ENCODE measurements at regions of chrX and their contacts with region 1.

Region 1: GRCh38 chrX:65534450-65535292 is at the start of gene LAS1L:
- DNase-seq: peak; percentile 93
- ATAC-seq: peak; percentile 99
- H3K4me3 ChIP-seq: peak within 1 kb of the TSS; percentile 56 to 82 (median 79)
- H3K4me3 Mint-ChIP-seq: peak within 1 kb of the TSS; percentile 98
- H3K27ac ChIP-seq: peak within 1 kb of the TSS; percentile 58 to 63
- H3K27ac Mint-ChIP-seq: peak within 1 kb of the TSS; percentile 96
- H3K4me1 ChIP-seq: peaks cover 12 to 19% of the 10 kb centered on the region in 2 donors
- H3K4me1 Mint-ChIP-seq: peaks cover 18% of the 10 kb centered on the region
- H3K27me3 ChIP-seq: no peaks in the 10 kb centered on the region
- H3K27me3 Mint-ChIP-seq: no peaks in the 10 kb centered on the region
- CTCF ChIP-seq: no peak
- total RNA-seq, gene LAS1L: 44.5 and 46.7 TPM in 2 replicates

Region 2: DNA sequence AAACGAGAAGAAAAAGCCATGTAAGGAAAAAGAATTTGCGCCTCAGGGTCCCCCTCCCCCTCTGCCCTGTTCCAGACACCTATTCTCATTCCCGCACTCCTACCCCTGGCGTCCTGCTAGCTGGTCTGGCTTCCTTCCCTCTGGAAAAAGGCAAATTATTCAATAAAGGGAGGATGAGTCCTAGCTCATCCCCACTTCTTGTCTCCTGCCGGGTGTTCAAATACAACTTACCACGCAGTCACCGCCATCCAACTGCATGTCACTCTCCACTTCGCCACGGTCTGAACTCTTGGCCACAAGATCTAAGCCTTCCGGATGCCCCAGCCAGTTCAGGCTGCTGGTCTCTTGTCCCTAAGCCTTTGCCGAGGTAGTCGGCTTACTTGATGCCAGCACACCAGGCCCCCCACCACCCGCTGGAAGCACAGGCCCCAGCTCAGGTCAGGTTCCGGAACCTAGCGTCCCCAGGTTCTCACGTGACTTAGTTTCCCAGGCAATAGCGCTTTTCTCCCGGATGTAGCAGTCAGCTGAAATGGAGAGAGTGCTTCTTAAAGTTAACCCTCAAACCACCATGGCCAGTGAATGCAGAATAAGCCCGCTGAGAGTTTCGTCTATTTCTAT is 1974.0 kb before region 1 on chrX:
- CTCF ChIA-PET with region 1: no interaction called
- POLR2A ChIA-PET with region 1: no interaction called
- intact Hi-C with region 1: loop called (anchors 10 kb)
- DNase-seq: peak; percentile 63
- ATAC-seq: peak; percentile 68
- H3K4me3 ChIP-seq: peak overlapping the region; percentile 62 to 77 (median 63)
- H3K4me3 Mint-ChIP-seq: peak overlapping the region; percentile 99
- H3K27ac ChIP-seq: peak overlapping the region; percentile 38 to 75
- H3K27ac Mint-ChIP-seq: peak overlapping the region; percentile 91
- H3K4me1 ChIP-seq: peaks cover 6 to 8% of the 10 kb centered on the region in 2 donors
- H3K4me1 Mint-ChIP-seq: peaks cover 29% of the 10 kb centered on the region
- H3K27me3 ChIP-seq: peaks cover 0 to under 1% (median 0%) of the 10 kb centered on the region in 4 experiments
- H3K27me3 Mint-ChIP-seq: no peaks in the 10 kb centered on the region
- CTCF ChIP-seq: no peak

Region 3: DNA sequence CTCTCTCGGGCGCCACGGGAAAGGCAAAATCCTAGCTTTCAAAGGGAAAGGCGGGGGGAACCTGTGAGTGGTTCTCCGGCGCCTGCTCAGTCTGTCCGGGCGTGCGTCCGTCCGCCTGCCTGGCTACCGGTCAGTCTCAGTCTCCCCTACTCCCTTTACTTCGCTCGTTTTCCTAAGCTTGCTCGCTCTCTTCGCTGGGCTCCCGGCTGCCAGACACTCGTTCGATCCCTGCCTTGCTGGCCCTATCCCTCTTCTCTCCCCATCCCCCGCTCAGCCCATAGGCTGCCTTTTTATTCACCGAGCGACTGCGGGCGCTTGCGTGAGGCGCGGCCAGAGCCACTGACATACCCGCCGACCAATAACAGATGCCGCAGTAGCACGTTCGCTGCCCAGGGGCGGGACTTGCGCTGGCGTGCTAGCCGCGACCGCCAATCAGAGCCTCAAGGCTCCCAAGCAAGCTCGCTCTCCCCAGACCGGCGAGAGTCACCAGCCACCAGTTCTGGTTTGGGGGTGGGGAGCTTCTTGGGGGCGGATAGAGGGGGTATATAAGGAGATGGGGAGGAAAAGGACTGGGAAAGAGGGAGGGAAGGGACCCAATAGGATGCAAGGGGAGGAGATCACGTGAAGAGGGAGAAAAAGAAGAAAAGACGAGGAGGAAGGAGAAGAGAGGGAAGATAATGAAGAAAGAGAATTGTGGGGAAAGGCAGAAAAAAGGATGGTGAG is 1779.7 kb before region 1 on chrX:
- CTCF ChIA-PET with region 1: no interaction called
- POLR2A ChIA-PET with region 1: no interaction called
- intact Hi-C with region 1: loop called (anchors 2 kb)
- DNase-seq: peak; percentile 89
- ATAC-seq: peak; percentile 98
- H3K4me3 ChIP-seq: peak overlapping the region; percentile 65 to 86 (median 75)
- H3K4me3 Mint-ChIP-seq: peak overlapping the region; percentile 100
- H3K27ac ChIP-seq: peak overlapping the region; percentile 79 to 80
- H3K27ac Mint-ChIP-seq: peak overlapping the region; percentile 97
- H3K4me1 ChIP-seq: peaks cover 4 to 14% of the 10 kb centered on the region in 2 donors
- H3K4me1 Mint-ChIP-seq: peaks cover 27% of the 10 kb centered on the region
- H3K27me3 ChIP-seq: no peaks in the 10 kb centered on the region
- H3K27me3 Mint-ChIP-seq: no peaks in the 10 kb centered on the region
- CTCF ChIP-seq: no peak

Region 4: GRCh38 chrX:64394874-64395567 is 1139.7 kb before region 1 on chrX and contains the start of gene MTMR8:
- CTCF ChIA-PET with region 1: no interaction called
- POLR2A ChIA-PET with region 1: no interaction called
- intact Hi-C with region 1: loop called (anchors 2 kb)
- DNase-seq: peak; percentile 82
- ATAC-seq: peak; percentile 89
- H3K4me3 ChIP-seq: peak within 1 kb of the TSS; percentile 49 to 85 (median 72)
- H3K4me3 Mint-ChIP-seq: peak within 1 kb of the TSS; percentile 98
- H3K27ac ChIP-seq: peak within 1 kb of the TSS; percentile 24 to 65
- H3K27ac Mint-ChIP-seq: peak within 1 kb of the TSS; percentile 90
- H3K4me1 ChIP-seq: peaks cover 0 to 15% of the 10 kb centered on the region in 2 donors
- H3K4me1 Mint-ChIP-seq: peaks cover 35% of the 10 kb centered on the region
- H3K27me3 ChIP-seq: no peaks in the 10 kb centered on the region
- H3K27me3 Mint-ChIP-seq: no peaks in the 10 kb centered on the region
- CTCF ChIP-seq: no peak
- total RNA-seq, gene MTMR8: 11.6 and 11.8 TPM in 2 replicates

Region 5: GRCh38 chrX:64975989-64976672 is 558.5 kb before region 1 on chrX and contains the start of gene ZC4H2:
- CTCF ChIA-PET with region 1: no interaction called
- POLR2A ChIA-PET with region 1: no interaction called
- intact Hi-C with region 1: loop called (anchors 1 kb)
- DNase-seq: peak; percentile 74
- ATAC-seq: peak; percentile 96
- H3K4me3 ChIP-seq: peak within 1 kb of the TSS; percentile 39 to 64 (median 58)
- H3K4me3 Mint-ChIP-seq: peak within 1 kb of the TSS; percentile 92
- H3K27ac ChIP-seq: peak within 1 kb of the TSS in 1 of 2 donors; percentile 33
- H3K27ac Mint-ChIP-seq: peak within 1 kb of the TSS; percentile 64
- H3K4me1 ChIP-seq: peaks cover 4 to 5% of the 10 kb centered on the region in 2 donors
- H3K4me1 Mint-ChIP-seq: peaks cover 15% of the 10 kb centered on the region
- H3K27me3 ChIP-seq: no peaks in the 10 kb centered on the region
- H3K27me3 Mint-ChIP-seq: no peaks in the 10 kb centered on the region
- CTCF ChIP-seq: no peak
- total RNA-seq, gene ZC4H2: 10.9 and 14.1 TPM in 2 replicates

Region 6: DNA sequence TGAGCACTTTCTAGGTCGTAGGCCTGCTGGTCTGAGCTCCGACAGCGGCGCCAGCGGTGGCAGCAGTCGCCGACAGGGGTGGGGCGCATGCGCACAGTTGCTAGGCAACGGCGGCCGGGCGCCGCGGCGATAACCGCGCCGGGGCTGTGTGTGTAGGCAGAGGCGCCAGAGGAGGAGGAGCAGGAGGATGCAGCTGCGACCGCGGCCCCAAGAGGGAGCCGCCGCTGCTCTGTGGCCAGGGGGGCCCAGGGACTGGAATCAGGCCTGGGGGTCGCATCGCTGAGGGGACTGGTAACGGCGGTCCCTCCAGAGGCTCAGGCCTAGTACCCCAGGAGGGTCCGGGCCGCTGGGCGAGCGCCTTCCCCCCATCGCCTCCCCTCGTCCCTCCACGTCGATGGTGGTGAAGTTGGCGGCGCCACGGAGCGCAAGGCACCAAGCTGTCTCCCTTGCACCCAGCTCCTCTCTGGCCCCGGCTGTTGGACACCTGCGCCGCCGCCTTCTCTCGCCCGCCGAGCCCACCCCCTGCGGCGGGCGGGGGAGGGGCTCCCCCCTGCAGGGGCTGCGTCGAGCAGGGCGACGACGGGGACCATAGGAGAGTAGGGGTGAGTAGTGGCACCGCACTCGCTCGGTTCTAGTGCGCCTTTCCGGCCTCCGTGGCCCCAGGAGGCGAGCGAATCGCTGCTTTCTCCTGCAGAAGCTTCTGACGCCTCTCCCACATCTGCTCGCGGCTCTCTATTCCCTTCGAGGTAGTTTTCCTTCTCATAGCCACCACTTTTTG is 499.8 kb before region 1 on chrX:
- CTCF ChIA-PET with region 1: no interaction called
- POLR2A ChIA-PET with region 1: no interaction called
- intact Hi-C with region 1: loop called (anchors 1 kb)
- DNase-seq: peak; percentile 89
- ATAC-seq: peak; percentile 90
- H3K4me3 ChIP-seq: peak within 1 kb of the TSS; percentile 6 to 71 (median 68)
- H3K4me3 Mint-ChIP-seq: peak within 1 kb of the TSS; percentile 96
- H3K27ac ChIP-seq: peak within 1 kb of the TSS; percentile 73 to 85
- H3K27ac Mint-ChIP-seq: peak within 1 kb of the TSS; percentile 98
- H3K4me1 ChIP-seq: peaks cover 8 to 10% of the 10 kb centered on the region in 2 donors
- H3K4me1 Mint-ChIP-seq: peaks cover 24% of the 10 kb centered on the region
- H3K27me3 ChIP-seq: no peaks in the 10 kb centered on the region
- H3K27me3 Mint-ChIP-seq: no peaks in the 10 kb centered on the region
- CTCF ChIP-seq: peak; percentile 57

Region 7: DNA sequence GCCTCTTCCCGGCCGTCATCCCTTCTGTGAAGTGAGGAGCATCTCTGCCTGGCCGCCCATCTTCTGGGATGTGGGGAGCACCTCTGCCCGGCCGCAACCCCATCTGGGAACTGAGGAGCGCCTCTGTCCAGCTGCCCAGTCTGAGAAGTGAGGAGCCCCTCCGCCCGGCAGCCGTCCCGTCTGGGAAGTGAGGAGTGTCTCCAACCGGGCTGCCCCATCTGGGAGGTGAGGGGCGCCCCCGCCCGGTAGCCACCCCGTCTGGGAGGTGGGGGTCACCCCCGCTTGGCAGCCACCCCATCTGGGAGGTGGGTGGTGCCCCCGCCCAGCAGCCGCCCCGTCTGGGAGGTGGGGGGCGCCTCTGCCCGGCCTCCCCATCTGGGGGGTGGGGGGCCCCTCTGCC is 142.4 kb before region 1 on chrX:
- CTCF ChIA-PET with region 1: no interaction called
- POLR2A ChIA-PET with region 1: no interaction called
- intact Hi-C with region 1: no loop called
- DNase-seq: no peak
- ATAC-seq: no peak
- H3K4me3 ChIP-seq: no peak overlapping the region
- H3K4me3 Mint-ChIP-seq: no peak overlapping the region
- H3K27ac ChIP-seq: no peak overlapping the region
- H3K27ac Mint-ChIP-seq: no peak overlapping the region
- H3K4me1 ChIP-seq: no peaks in the 10 kb centered on the region
- H3K4me1 Mint-ChIP-seq: no peaks in the 10 kb centered on the region
- H3K27me3 ChIP-seq: no peaks in the 10 kb centered on the region
- H3K27me3 Mint-ChIP-seq: no peaks in the 10 kb centered on the region
- CTCF ChIP-seq: no peak